Dorsolateral prefrontal cortex (tissue), 120 donors: ENCODE measurements at regions of chr19 and their contacts with region 1.

Region 1: GRCh38 chr19:36054119-36054732 is at the start of gene THAP8:
- DNase-seq: peak; percentile 98 to 99 (median 99)
- H3K4me3 ChIP-seq: peak within 1 kb of the TSS; percentile 49 to 98 (median 76)
- H3K27ac ChIP-seq: peak within 1 kb of the TSS; percentile 80 to 100 (median 98)
- H3K27me3 ChIP-seq: no peaks in the 10 kb centered on the region
- CTCF ChIP-seq: peak in 51 of 56 donors; percentile 24 to 69 (median 48)
- total RNA-seq, gene THAP8: 4.2 to 11.7 (median 7.3) TPM

Region 2: GRCh38 chr19:35995048-35995993 is 58.9 kb before region 1 on chr19 and contains the start of gene SDHAF1:
- intact Hi-C with region 1: loop called (anchors 2 to 5 kb)
- DNase-seq: peak; percentile 95 to 99 (median 98)
- H3K4me3 ChIP-seq: peak within 1 kb of the TSS; percentile 65 to 99 (median 90)
- H3K27ac ChIP-seq: peak within 1 kb of the TSS in 55 of 59 donors; percentile 24 to 91 (median 75)
- H3K27me3 ChIP-seq: no peaks in the 10 kb centered on the region
- CTCF ChIP-seq: peak in 31 of 56 donors; percentile 17 to 56 (median 28)
- total RNA-seq, gene SDHAF1: 13.8 to 31.6 (median 21.0) TPM

Region 3: DNA sequence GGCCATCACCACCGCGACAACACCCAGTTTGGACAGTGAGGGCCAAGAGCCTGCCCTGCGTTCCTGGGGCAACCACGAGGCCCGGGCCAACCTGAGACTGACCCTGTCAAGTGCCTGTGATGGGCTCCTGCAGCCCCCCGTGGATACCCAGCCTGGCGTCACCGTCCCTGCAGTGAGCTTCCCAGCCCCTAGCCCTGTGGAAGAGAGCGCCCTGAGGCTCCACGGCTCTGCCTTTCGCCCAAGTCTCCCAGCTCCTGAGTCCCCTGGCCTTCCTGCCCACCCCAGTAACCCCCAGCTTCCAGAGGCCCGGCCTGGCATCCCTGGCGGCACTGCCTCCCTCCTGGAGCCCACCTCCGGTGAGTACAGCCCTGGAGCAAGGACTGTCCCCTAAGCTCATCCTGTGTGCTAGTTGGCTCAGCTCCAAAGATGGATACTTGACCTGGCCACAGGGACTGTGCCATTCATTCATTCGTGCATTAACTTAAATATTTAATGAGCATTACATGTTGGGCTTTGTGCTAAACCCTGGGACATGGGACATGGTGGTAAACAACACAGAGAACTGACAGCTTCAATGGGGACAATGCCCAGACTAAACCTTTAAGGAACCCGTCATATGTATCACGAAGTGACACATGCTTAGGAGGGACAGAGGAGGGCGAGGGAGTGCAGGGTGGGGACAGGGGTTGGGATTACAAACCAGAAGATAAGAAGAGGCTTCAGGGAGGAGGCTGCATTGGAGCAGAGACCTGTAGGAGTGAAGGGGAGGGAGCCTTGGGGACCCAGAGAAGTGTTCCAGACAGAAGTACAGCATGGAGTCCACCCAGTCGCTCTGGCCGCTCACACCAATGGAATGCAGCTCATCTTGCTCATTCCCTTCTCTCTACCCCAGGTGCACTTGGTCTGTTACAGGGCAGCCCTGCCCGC is 49.7 kb after region 1 on chr19:
- intact Hi-C with region 1: no loop called
- DNase-seq: no peak
- H3K4me3 ChIP-seq: no peak overlapping the region
- H3K27ac ChIP-seq: peak overlapping the region in 2 of 59 donors; percentile 3 to 31
- H3K27me3 ChIP-seq: no peaks in the 10 kb centered on the region
- CTCF ChIP-seq: no peak

Region 4: GRCh38 chr19:36114763-36115452 is 60.7 kb after region 1 on chr19 and contains the start of gene POLR2I:
- intact Hi-C with region 1: loop called (anchors 1 kb)
- DNase-seq: peak; percentile 97 to 100 (median 100)
- H3K4me3 ChIP-seq: peak within 1 kb of the TSS; percentile 61 to 98 (median 92)
- H3K27ac ChIP-seq: peak within 1 kb of the TSS; percentile 75 to 99 (median 95)
- H3K27me3 ChIP-seq: no peaks in the 10 kb centered on the region
- CTCF ChIP-seq: peak in 20 of 56 donors; percentile 1 to 60 (median 20)
- total RNA-seq, gene POLR2I: 61.9 to 165 (median 106) TPM